Right cardiac atrium (tissue), 5 donors: ENCODE measurements at regions of chr18 and their contacts with region 1.

Region 1: DNA sequence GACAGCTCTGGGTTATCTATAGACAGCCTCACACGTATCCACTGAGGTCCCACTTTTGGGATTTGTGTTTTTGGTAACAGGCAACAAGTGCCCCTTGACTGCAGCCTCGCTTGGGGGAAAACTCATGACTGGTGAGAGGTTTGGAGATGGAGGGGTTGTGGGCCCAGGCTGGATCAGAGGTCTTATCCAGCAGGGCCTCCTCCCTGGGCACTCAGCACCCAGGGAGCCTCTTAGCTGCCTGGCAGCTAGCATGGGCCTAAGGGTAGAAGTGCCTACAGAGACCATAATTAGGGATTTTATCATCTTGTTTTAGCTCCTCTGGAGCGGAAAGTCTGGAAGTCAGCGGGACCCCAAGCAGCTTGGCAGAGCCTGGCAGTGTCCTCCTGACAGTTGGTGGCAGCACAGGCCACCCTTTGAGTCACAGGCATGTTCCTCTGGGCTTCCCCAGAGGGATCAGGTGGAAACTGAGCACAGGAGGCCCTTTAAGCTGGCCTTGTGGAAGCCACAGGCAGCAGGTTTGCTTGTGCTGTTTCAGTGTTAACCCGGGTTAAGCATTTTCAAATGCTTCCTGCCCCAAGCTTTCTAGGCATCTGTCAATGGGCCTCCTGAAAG is 143.1 kb downstream of the KCTD1 start:
- DNase-seq: peak; percentile 42 to 66 (median 56)
- ATAC-seq: peak; percentile 86 to 91
- H3K4me3 ChIP-seq: no peak overlapping the region
- H3K27ac ChIP-seq: no peak overlapping the region
- H3K4me1 ChIP-seq: no peaks in the 10 kb centered on the region
- H3K27me3 ChIP-seq: no peaks in the 10 kb centered on the region

Region 2: DNA sequence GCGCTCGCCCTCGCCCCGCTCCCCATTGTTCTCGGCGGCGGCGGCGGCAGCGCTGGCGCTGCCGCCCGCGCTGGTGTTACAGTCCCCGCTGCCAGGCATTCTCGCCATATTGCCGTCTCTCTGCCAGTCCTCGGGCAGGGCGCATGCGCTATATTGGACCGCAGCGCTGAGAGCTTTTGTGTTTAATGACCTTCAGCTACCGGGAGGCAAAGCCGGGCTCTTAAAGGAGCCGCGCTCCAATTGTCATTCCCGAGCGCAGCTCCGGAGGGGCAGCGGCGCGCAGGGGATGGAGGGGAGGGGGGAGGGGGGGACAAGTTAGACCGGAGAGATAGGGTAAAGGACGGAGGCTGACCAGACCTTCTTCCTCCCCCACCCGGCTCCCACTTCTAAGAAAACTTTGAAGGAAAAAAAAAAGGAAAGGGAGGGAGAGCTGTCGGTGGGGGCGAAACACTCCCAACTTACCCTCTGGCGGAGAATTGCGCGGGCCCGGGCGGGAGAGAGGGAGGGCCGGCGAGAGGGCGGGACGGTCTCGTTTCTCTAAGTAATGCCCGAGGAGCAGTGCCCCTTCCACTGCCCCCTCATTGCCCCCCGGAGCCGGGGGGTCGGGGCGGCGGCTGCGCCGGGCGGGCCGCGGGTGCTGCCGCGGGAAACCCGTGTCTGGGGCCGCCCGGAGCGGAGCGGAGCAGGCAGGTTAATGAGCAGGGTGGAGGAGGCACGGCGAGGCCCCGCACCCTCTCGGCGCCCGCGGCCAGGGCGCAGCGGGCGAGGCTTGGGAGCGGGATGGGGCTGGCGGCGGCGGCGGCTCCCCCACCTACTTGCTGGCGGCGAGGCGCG is 143.3 kb after region 1 on chr18 and contains the start of gene KCTD1:
- intact Hi-C with region 1: loop called in 1 of 4 experiments (anchors 10 kb)
- DNase-seq: peak; percentile 89 to 94 (median 93)
- ATAC-seq: peak; percentile 72
- H3K4me3 ChIP-seq: peak within 1 kb of the TSS; percentile 92
- H3K27ac ChIP-seq: peak within 1 kb of the TSS; percentile 82
- H3K4me1 ChIP-seq: peaks cover 9% of the 10 kb centered on the region
- H3K27me3 ChIP-seq: no peaks in the 10 kb centered on the region
- total RNA-seq, gene KCTD1: 45.2 to 51.8 (median 49.4) TPM

Region 3: DNA sequence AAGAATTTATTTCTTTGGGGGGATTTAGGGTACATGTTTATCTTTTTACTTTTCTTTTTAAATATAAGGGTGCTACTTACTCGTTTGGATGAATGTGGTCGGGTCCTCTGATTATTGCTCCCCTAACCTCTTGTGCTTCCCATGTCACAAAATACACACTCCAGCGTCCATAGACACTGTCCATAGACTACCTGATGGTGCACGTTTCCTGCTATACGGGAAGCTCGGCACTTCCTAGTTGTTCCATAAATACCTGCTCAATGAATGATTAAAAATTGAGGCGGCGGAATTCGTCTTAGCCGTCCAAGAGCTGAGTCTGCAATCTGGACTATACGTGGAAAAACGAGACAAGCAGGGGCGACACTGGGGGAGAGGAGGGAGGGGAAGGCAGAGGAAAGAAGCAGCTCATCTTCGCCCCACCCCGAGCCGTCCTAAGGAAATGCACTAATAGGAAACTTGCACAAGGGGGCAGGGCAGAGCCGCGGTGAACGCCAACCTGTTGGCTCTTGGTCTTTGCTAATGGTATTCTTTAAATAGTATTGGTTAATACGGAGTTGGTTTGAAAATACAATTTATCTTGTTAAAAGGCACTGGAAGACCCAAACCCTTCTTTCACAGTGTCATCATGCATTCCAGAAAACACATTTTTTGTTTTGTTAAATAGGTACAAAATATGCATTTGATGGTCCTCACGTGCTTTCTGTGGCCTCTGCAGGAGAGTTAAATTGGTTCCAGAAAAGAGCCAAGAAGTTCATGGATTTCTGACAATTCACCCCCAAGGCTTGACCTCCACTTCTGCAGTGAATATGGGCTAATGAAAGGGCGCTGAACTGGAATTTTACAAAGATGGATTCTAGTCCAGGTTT is 216.1 kb after region 1 on chr18:
- intact Hi-C with region 1: loop called in 1 of 4 experiments (anchors 10 kb)
- DNase-seq: peak; percentile 44 to 76 (median 75)
- ATAC-seq: peak; percentile 80 to 82
- H3K4me3 ChIP-seq: no peak overlapping the region
- H3K27ac ChIP-seq: no peak overlapping the region
- H3K4me1 ChIP-seq: no peaks in the 10 kb centered on the region
- H3K27me3 ChIP-seq: no peaks in the 10 kb centered on the region

Region 4: DNA sequence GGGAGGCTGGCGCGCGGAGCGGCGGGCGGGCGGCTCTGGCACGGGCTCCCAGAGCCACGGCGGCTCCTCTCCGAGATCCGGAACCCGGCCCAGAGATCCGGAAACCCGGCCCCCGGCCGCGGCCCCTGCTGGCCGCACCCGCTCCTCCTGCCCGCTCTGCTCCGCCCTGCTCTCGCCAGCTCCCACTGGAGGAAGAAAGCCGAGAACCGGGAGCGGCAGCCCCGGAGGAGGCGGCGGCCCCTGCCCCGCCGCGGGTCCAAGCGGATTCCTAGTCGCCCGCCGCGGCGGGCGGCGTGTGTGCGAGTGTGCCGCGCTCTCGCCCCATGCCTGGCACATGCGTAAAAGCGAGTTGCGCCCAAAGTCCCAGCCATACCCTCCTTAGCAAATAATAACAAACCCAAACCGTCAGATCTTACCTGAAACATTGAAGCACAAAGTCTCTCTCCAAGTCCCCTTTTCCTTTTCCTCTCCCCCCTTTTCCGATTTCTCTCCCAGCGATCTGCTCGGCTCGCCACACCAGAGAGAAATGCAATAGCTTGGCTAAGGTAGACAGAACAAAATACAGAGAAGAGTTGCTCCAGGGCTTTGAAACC is 251.7 kb after region 1 on chr18:
- intact Hi-C with region 1: loop called in 1 of 4 experiments (anchors 10 kb)
- DNase-seq: peak; percentile 90 to 95 (median 94)
- ATAC-seq: peak; percentile 96 to 97
- H3K4me3 ChIP-seq: peak overlapping the region; percentile 99
- H3K27ac ChIP-seq: peak overlapping the region; percentile 97
- H3K4me1 ChIP-seq: no peaks in the 10 kb centered on the region
- H3K27me3 ChIP-seq: no peaks in the 10 kb centered on the region

Region 5: DNA sequence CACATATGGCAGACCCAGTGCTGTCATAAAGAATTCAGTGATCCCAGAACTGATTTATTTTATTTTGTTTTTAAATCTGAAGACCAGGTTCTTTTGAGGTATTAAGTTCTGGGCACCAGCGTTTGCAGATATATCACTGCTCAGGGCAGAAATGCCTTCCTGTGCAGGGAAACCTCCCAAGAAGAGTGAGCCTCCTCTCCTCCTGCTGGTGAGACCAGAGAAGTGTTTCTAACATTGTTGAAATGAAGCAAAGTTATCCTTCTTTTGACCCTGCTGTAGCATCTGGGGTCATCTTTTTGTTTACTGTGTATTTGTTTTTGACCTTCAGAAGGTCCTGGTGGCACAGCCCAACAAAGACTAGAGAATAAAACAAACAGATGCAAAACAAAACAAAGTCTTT is 366.2 kb after region 1 on chr18:
- intact Hi-C with region 1: loop called in 2 of 4 experiments (anchors 10 kb)
- DNase-seq: no peak
- ATAC-seq: peak; percentile 50 to 61
- H3K4me3 ChIP-seq: no peak overlapping the region
- H3K27ac ChIP-seq: no peak overlapping the region
- H3K4me1 ChIP-seq: no peaks in the 10 kb centered on the region
- H3K27me3 ChIP-seq: no peaks in the 10 kb centered on the region

Region 6: DNA sequence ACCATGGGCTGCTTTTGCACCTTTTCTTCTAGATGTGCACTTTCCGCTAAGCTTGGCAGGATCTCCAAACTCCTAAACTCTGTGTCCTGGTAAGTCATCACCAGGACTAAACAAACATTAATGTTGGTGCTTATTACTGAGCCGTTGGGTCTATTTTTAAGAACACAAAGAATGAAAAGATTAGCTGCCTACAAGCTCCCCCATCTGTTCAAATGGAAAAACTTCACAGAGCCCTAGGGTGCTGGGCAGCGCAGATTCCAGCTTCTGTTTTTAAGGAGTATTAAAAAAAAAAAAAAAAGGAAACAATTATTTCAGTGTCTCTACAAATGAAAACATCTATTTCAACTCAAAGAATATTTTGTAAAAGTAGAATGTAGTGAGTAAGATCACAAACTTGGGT is 558.0 kb after region 1 on chr18:
- intact Hi-C with region 1: loop called in 1 of 4 experiments (anchors 10 kb)
- DNase-seq: no peak
- ATAC-seq: peak in 1 of 2 donors; percentile 51
- H3K4me3 ChIP-seq: no peak overlapping the region
- H3K27ac ChIP-seq: no peak overlapping the region
- H3K4me1 ChIP-seq: no peaks in the 10 kb centered on the region
- H3K27me3 ChIP-seq: no peaks in the 10 kb centered on the region